Activated CD8-positive, alpha-beta memory T cell treated with anti-CD3 and anti-CD28 coated beads, Interleukin-2, amount 10 ng/mL, durations not matched to agents 7 days and 5 days (primary cell): ENCODE measurements at regions of chr17 and their contacts with region 1.

Region 1: GRCh38 chr17:75109407-75110233 is at the start of gene ARMC7:
- DNase-seq: peak; percentile 93
- ATAC-seq: peak; percentile 88
- H3K4me3 Mint-ChIP-seq: peak within 1 kb of the TSS; percentile 88
- H3K27ac Mint-ChIP-seq: peak within 1 kb of the TSS; percentile 90
- H3K4me1 Mint-ChIP-seq: peaks cover 35% of the 10 kb centered on the region
- H3K27me3 Mint-ChIP-seq: no peaks in the 10 kb centered on the region
- total RNA-seq, gene ARMC7: 13.5 to 14.5 TPM

Region 2: GRCh38 chr17:75059369-75060345 is 50.0 kb before region 1 on chr17:
- CTCF ChIA-PET with region 1: interaction called, 10 read pairs
- DNase-seq: no peak
- ATAC-seq: no peak
- H3K4me3 Mint-ChIP-seq: no peak overlapping the region
- H3K27ac Mint-ChIP-seq: no peak overlapping the region
- H3K4me1 Mint-ChIP-seq: peaks cover 5% of the 10 kb centered on the region
- H3K27me3 Mint-ChIP-seq: no peaks in the 10 kb centered on the region

Region 3: GRCh38 chr17:75131280-75132017 is 21.8 kb after region 1 on chr17 and contains the start of gene NT5C:
- CTCF ChIA-PET with region 1: interaction called, 233 read pairs
- DNase-seq: peak; percentile 86
- ATAC-seq: peak; percentile 87
- H3K4me3 Mint-ChIP-seq: peak within 1 kb of the TSS; percentile 81
- H3K27ac Mint-ChIP-seq: peak within 1 kb of the TSS; percentile 89
- H3K4me1 Mint-ChIP-seq: peaks cover 28% of the 10 kb centered on the region
- H3K27me3 Mint-ChIP-seq: no peaks in the 10 kb centered on the region
- total RNA-seq, gene NT5C: 65.2 to 73.1 TPM

Region 4: GRCh38 chr17:75182569-75183450 is 73.2 kb after region 1 on chr17 and contains the start of gene SUMO2:
- CTCF ChIA-PET with region 1: interaction called, 217 read pairs
- DNase-seq: peak; percentile 96
- ATAC-seq: peak; percentile 83
- H3K4me3 Mint-ChIP-seq: peak within 1 kb of the TSS; percentile 91
- H3K27ac Mint-ChIP-seq: peak within 1 kb of the TSS; percentile 99
- H3K4me1 Mint-ChIP-seq: peaks cover 48% of the 10 kb centered on the region
- H3K27me3 Mint-ChIP-seq: no peaks in the 10 kb centered on the region
- total RNA-seq, gene SUMO2: 469 to 639 TPM

Region 5: DNA sequence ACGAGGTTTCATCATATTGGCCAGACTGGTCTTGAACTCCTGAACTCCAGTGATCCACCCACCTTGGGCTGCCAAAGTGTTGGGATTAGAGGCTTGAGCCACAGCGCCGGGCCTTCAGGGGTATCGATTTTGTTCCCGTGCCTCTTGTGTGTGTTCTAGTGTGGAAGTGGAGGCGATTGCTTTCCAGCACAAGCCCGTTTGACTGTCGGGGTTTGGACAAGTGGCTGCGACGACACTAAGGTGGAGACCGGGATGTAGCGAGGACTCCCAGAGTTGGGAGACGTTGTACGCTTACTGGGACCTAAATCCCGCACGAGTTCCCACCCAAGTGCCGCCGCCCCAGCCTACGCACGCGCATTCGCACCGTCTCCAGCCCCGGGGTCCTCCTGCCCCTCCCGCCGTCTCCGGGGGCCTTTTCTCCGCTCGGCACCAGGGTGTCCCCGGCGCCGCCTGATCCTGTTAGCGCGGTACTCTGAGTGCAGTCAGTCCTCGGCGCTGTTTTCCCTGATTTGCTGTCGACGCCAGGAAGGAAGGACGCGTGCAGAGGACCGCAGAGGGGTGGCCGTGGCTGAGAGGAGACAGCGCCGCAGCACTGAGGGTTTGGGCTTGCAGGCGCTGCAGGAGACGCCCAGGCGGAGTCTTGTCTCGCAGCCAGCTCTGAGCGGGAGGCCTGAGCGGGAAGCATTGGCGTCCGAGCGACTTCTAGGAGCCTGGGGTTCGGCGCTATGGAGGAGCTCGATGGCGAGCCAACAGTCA is 95.6 kb after region 1 on chr17 and contains the start of gene NUP85:
- CTCF ChIA-PET with region 1: interaction called, 257 read pairs
- DNase-seq: peak; percentile 93
- ATAC-seq: peak; percentile 90
- H3K4me3 Mint-ChIP-seq: peak within 1 kb of the TSS; percentile 95
- H3K27ac Mint-ChIP-seq: peak within 1 kb of the TSS; percentile 96
- H3K4me1 Mint-ChIP-seq: peaks cover 28% of the 10 kb centered on the region
- H3K27me3 Mint-ChIP-seq: no peaks in the 10 kb centered on the region
- total RNA-seq, gene NUP85: 164 to 176 TPM

Region 6: GRCh38 chr17:75261336-75262111 is 151.9 kb after region 1 on chr17 and contains the starts of genes GGA3 and MRPS7:
- CTCF ChIA-PET with region 1: interaction called, 15 read pairs
- DNase-seq: peak; percentile 97
- ATAC-seq: peak; percentile 96
- H3K4me3 Mint-ChIP-seq: peak within 1 kb of the TSS; percentile 94
- H3K27ac Mint-ChIP-seq: peak within 1 kb of the TSS; percentile 99
- H3K4me1 Mint-ChIP-seq: peaks cover 44% of the 10 kb centered on the region
- H3K27me3 Mint-ChIP-seq: no peaks in the 10 kb centered on the region
- total RNA-seq, gene GGA3: 84.6 to 90.2 TPM
- total RNA-seq, gene MRPS7: 49.5 to 56.9 TPM

Region 7: DNA sequence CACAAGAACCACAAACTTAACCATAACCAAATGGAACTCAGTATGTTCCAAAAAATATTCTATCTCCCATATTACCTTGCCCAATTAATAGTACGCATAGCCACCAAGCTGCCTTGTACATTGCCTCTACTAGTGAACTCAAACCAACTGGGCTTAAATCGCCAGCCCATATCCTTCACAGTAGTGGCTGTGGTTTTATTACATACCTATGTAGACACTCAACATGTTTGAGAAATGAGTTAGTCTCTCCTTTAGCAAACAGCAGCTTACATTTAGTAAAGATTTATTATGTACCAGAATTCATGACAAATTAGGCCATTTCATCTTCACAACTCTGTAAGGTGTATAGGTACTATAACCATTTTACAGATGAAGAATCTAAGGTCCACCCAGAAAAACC is 254.5 kb after region 1 on chr17:
- CTCF ChIA-PET with region 1: no interaction called
- DNase-seq: no peak
- ATAC-seq: no peak
- H3K4me3 Mint-ChIP-seq: no peak overlapping the region
- H3K27ac Mint-ChIP-seq: no peak overlapping the region
- H3K4me1 Mint-ChIP-seq: peaks cover 82% of the 10 kb centered on the region
- H3K27me3 Mint-ChIP-seq: no peaks in the 10 kb centered on the region

Region 8: DNA sequence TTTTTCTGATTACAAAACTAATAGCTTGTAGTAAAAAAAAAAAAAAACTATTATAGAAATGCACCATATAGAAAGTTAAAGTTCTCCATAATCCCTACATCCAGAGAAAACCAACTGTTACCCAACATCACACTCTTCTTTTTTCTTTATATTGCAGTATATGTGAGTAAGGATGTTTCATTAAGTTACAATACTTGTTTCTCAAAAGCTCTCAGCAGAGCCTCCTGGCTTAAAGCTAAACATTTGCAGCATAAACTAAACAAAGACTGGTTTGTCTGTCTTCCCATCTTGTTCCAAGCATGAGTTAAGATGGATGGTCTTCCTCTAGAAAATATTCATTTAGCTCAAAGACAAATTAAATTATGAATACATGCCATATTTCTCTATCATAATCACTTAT is 270.7 kb after region 1 on chr17:
- CTCF ChIA-PET with region 1: no interaction called
- DNase-seq: no peak
- ATAC-seq: no peak
- H3K4me3 Mint-ChIP-seq: no peak overlapping the region
- H3K27ac Mint-ChIP-seq: no peak overlapping the region
- H3K4me1 Mint-ChIP-seq: peaks cover 19% of the 10 kb centered on the region
- H3K27me3 Mint-ChIP-seq: no peaks in the 10 kb centered on the region

Region 9: GRCh38 chr17:75412455-75413317 is 303.1 kb after region 1 on chr17:
- CTCF ChIA-PET with region 1: interaction called, 15 read pairs
- DNase-seq: peak; percentile 83
- ATAC-seq: peak; percentile 90
- H3K4me3 Mint-ChIP-seq: peak overlapping the region; percentile 31
- H3K27ac Mint-ChIP-seq: peak overlapping the region; percentile 66
- H3K4me1 Mint-ChIP-seq: peaks cover 27% of the 10 kb centered on the region
- H3K27me3 Mint-ChIP-seq: peaks cover 16% of the 10 kb centered on the region